CD8-positive, alpha-beta T cell (primary cell): ENCODE measurements at regions of chr7 and their contacts with region 1.

Region 1: DNA sequence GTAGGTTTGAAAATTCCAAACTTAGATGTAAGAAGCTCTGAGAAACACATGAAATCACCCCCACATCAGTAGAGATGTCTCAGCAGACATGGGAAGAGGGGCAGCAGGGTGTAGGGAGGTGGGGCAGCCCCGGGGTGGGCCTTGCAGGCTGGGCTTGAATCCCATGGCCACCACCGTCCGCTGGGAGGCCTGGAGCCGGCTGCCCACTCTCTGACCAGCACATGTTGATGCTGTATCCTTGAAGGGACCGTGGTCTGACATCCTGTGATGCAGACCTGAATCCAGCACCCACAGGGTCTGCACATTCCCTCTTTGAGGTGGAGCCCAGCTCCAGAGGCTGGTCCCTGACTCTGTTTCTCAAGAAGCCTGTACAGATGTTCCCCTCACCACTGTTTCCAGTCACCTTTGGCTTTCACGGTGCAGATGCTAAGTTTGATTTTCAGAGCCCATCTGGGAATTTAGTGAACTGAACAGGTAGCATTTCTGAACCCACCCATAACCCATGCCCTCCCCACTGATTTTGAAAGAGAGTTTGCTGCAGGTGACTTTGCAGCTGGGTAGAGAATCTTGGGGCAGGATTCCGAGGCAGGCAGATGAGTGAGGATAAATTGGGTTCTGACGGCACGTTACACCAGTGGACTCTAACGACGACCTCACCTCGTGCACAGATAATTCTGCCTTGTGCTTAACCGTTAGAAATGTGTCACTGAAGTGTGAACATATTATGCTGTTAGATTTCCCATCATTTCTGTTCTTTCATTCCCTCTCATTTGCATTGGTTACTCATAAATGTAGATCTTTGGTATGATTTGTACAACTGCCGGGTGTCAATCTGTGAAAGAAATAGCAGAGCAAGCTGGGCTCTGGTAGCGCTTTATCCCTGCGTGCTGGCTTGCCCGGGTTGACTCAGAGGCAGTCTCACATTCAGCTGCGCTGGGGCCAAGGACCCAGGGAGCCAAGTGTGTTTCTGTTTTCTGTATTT is 45.7 kb downstream of the IKZF1 start:
- DNase-seq: peak in 8 of 9 experiments; percentile 58 to 82 (median 75)
- ATAC-seq: peak; percentile 63
- H3K4me3 ChIP-seq: peak overlapping the region; percentile 4 to 23
- H3K4me3 Mint-ChIP-seq: peak overlapping the region; percentile 56
- H3K27ac ChIP-seq: peak overlapping the region; percentile 67 to 90
- H3K27ac Mint-ChIP-seq: peak overlapping the region; percentile 96
- H3K4me1 ChIP-seq: peaks cover 100% of the 10 kb centered on the region
- H3K4me1 Mint-ChIP-seq: peaks cover 98% of the 10 kb centered on the region
- H3K27me3 ChIP-seq: no peaks in the 10 kb centered on the region
- H3K27me3 Mint-ChIP-seq: no peaks in the 10 kb centered on the region
- CTCF ChIP-seq: no peak

Region 2: DNA sequence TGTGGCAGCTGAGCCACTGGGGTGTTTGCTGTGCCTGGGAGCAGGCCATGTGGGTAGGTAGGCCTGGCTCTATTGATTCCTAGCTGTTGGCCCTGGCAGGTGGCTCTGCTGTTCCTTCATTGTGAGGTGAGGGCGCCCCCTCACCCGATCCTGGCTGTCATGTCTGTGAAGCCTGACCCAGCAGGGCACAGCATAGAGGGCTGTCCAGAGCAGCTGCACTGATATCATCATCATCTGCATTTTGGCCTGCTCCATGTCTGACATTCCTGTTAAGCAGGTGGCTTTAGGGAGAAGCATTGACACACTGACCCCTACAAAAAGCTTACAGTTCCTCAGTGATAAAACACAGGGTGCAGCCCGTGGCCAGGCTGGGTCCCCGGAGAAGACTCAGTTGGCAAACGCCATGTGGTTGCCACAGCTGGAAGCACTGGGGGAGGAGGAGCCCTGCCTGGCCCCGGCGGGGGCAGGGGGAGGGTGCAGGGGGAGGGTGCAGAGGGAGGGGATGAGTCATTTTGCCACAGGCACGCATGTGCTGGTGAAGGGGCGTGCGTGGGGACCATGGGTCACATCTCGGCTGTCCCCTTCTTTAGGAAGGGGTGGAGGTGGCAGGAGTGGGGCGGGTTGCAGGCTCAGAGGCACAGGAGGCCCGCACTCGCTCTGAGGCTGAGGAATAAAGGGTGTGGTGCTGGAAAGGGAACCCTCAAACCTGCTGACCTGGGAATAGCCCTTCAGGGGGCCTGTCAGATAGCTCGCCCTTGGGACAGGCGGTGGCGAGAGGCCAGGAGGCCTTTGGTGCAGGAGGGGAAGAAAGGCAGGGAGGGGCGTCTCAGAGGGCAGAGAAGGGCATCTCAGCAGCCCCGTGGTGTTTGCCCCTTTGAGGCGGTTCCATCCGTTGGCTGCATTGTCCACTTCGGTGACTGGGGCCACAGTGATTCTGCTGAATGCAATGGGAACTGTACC is 14.2 kb before region 1 on chr7:
- CTCF ChIA-PET with region 1: interaction called, 12 read pairs
- POLR2A ChIA-PET with region 1: interaction called, 90 read pairs
- intact Hi-C with region 1: loop called (anchors 2 kb)
- DNase-seq: peak; percentile 55 to 91 (median 84)
- ATAC-seq: peak; percentile 55
- H3K4me3 ChIP-seq: peak overlapping the region; percentile 10 to 19
- H3K4me3 Mint-ChIP-seq: peak overlapping the region; percentile 77
- H3K27ac ChIP-seq: peak overlapping the region; percentile 40 to 90
- H3K27ac Mint-ChIP-seq: no peak overlapping the region
- H3K4me1 ChIP-seq: peaks cover 99% of the 10 kb centered on the region
- H3K4me1 Mint-ChIP-seq: peaks cover 35% of the 10 kb centered on the region
- H3K27me3 ChIP-seq: no peaks in the 10 kb centered on the region
- H3K27me3 Mint-ChIP-seq: no peaks in the 10 kb centered on the region
- CTCF ChIP-seq: no peak